ENCODE measurements at regions of chr15 and their contacts with region 1.

Region 1: GRCh38 chr15:40941528-40942336 is 11.5 kb upstream of the CHAC1 start:
- DNase-seq: peak; percentile 58 to 63
- ATAC-seq: peak; percentile 76 to 81
- H3K4me3 ChIP-seq: peak overlapping the region; percentile 61
- H3K27ac ChIP-seq: peak overlapping the region; percentile 89 to 94
- H3K4me1 ChIP-seq: peaks cover 18% of the 10 kb centered on the region
- CTCF ChIP-seq: peak; percentile 89
- EP300 ChIP-seq: no peak
- POLR2A ChIP-seq: no peak; the same call in 1 of the 2 replicates
- RAD21 ChIP-seq: peak; percentile 32 to 66; a peak in 4 of 5 replicates

Region 2: DNA sequence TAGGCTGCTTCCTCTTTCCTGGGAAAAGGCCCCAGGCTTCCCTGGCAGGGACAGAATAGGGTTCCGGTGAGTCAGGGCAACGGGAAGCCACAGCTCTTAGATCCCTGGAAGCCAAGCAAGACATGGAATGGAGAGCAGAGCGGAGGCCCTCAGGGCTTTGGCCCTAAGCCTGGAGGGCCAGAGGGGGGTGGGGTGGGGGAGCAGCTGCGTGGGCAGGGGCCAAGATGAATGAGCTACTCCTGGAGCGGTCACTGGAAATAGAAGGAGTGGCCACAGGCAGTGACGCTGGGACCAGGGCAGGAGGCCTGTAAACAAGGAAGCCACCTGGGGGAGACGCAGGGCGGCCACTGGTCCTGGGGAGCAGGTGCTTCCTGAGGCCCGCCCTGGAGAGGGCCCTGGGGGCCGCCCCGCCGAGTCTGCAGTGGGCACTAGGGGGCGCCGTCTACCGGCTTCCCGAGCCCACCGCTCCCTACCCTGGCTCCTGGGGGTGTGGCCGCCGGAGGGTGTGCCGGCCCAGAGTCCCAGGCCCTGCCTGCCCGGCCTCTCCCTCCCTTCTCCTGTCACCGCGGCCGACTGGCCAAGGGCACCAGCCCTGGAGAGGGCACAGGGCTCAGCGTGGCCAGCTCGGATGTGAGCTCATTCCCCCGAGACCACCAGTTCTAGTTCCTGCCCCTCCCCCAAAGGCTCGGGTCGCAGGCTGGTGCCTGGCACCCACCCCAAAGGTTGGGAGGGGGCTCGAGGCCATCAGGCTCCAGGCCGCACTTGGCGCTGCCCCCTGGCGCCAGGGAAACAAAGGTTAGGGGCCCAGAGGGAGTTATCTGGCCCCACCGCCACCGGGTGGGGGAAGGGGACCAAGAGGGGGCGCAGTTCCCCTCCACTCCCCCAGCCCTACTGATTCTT is 35.4 kb before region 1 on chr15:
- CTCF ChIA-PET with region 1: interaction called, 59 read pairs
- POLR2A ChIA-PET with region 1: no interaction called
- DNase-seq: peak in 1 of 2 experiments; percentile 64
- ATAC-seq: peak; percentile 68 to 90
- H3K4me3 ChIP-seq: peak overlapping the region; percentile 41
- H3K27ac ChIP-seq: peak overlapping the region; percentile 65 to 83
- H3K4me1 ChIP-seq: peaks cover 29% of the 10 kb centered on the region
- CTCF ChIP-seq: peak; percentile 61
- EP300 ChIP-seq: no peak
- POLR2A ChIP-seq: no peak
- RAD21 ChIP-seq: peak; percentile 52 to 65

Region 3: DNA sequence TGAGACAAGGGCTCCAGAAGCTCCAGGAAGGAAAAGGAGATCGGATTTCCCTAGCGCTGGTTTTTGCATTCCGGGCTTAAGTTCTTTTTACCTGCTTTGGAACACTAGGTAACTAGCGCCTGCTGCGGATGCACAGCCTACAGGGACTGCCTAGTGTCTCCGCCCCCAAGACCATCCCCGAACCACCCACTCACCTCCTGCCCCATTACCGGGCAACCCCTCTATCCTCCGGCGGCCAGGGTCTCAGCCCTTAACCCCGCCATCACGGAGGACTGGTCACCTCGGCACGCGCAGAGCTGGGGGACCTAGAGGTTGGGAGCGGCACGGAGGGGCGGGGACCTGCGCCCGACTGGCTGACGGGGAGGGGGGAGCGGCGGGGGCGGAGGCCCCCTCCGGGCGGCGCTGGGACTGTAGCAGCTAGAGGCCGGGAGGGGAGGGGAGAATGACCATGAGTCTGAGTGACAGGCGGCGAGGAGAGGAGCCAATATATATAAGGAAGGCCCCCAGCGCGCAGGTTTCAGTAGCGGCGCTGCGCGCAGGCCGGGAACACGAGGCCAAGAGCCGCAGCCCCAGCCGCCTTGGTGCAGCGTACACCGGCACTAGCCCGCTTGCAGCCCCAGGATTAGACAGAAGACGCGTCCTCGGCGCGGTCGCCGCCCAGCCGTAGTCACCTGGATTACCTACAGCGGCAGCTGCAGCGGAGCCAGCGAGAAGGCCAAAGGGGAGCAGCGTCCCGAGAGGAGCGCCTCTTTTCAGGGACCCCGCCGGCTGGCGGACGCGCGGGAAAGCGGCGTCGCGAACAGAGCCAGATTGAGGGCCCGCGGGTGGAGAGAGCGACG is 12.7 kb before region 1 on chr15 and contains the start of gene DLL4:
- CTCF ChIA-PET with region 1: interaction called, 70 read pairs
- POLR2A ChIA-PET with region 1: interaction called, 16 read pairs
- DNase-seq: peak; percentile 57 to 73
- ATAC-seq: peak; percentile 54 to 74
- H3K4me3 ChIP-seq: peak within 1 kb of the TSS; percentile 48
- H3K27ac ChIP-seq: peak within 1 kb of the TSS in 1 of 2 experiments; percentile 63; a peak in 3 of 6 replicates
- H3K4me1 ChIP-seq: peaks cover 24% of the 10 kb centered on the region; the same call in 1 of the 3 replicates
- CTCF ChIP-seq: no peak
- EP300 ChIP-seq: no peak
- POLR2A ChIP-seq: peak; percentile 70
- RAD21 ChIP-seq: no peak
- polyA plus RNA-seq, gene DLL4: 0.09 and 0.16 TPM in 2 replicates

Region 4: DNA sequence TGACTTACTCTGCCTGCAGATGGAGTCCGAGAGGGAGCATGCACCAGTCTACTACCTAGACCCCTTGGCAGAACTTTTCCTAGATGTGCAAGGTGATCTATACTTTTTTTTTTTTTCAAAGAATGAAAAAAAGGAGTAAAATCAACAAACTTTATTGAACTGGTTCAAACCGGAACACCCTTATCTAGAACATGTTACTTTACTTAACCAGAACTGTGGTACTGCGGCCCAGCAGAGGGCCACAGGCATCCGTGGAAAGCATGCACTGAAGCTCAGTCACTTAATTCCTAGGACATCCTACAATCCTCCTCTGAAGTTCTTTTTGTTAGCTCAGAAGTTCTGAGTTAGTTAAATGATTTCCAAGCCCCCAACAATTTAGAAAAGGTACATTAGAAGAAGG is 33.1 kb after region 1 on chr15:
- CTCF ChIA-PET with region 1: interaction called, 17 read pairs
- POLR2A ChIA-PET with region 1: no interaction called
- DNase-seq: no peak
- ATAC-seq: no peak
- H3K4me3 ChIP-seq: no peak overlapping the region
- H3K27ac ChIP-seq: no peak overlapping the region
- H3K4me1 ChIP-seq: peaks cover 14% of the 10 kb centered on the region; the same call in 2 of the 3 replicates
- CTCF ChIP-seq: no peak
- EP300 ChIP-seq: no peak
- POLR2A ChIP-seq: no peak
- RAD21 ChIP-seq: no peak

Region 5: GRCh38 chr15:41013698-41014414 is 72.1 kb after region 1 on chr15:
- CTCF ChIA-PET with region 1: interaction called, 15 read pairs
- POLR2A ChIA-PET with region 1: no interaction called
- DNase-seq: no peak
- ATAC-seq: no peak
- H3K4me3 ChIP-seq: no peak overlapping the region
- H3K27ac ChIP-seq: no peak overlapping the region
- H3K4me1 ChIP-seq: peaks cover 25% of the 10 kb centered on the region
- CTCF ChIP-seq: no peak
- EP300 ChIP-seq: no peak
- POLR2A ChIP-seq: no peak
- RAD21 ChIP-seq: no peak

Region 6: GRCh38 chr15:41180206-41180789 is 238.6 kb after region 1 on chr15:
- CTCF ChIA-PET with region 1: interaction called, 24 read pairs
- POLR2A ChIA-PET with region 1: no interaction called
- DNase-seq: no peak
- ATAC-seq: no peak
- H3K4me3 ChIP-seq: no peak overlapping the region
- H3K27ac ChIP-seq: no peak overlapping the region
- H3K4me1 ChIP-seq: 0 out of 3 replicates have a peak, but pooled peaks cover 7% of the 10 kb centered on the region
- CTCF ChIP-seq: no peak
- EP300 ChIP-seq: no peak
- POLR2A ChIP-seq: no peak
- RAD21 ChIP-seq: no peak

Region 7: DNA sequence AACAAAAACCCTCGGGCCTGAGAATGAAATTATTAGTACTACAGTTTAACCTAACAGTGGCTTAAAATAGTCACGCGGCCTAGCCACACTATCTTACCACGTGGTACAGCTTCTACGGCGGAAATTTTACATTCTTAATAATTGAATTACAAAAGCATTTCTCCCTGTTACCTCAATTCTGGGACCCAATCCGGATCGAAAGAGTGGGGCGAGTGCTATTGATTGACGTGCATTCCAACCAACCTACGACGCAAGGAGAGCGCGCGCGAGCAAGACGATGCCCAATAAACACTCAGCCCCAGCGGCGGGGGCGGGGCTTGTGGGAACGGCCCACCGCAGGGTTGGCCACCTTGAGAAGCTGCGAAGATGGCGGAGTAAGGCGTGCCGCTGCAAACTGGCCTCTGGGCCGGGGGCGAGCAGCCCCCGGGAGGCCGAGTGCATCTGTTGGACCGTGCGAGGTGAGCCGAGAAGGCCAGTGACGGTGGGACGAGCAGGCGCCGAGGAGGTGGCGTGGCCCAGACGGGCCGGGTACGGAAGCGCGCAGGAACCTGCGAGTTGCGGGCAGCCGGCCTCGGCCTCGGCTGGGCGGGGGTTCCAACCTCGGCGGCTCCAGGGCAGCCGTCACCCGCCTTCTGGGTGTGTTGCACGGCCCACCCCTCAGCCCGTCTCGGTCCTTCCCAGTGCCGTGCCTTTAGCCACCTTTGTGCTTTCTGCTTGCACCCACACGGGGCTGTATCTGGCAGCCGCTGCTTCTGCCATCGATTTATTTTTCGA is 342.1 kb after region 1 on chr15:
- CTCF ChIA-PET with region 1: no interaction called
- POLR2A ChIA-PET with region 1: no interaction called
- DNase-seq: peak; percentile 96 to 98
- ATAC-seq: peak; percentile 98
- H3K4me3 ChIP-seq: peak overlapping the region; percentile 88
- H3K27ac ChIP-seq: peak overlapping the region; percentile 95 to 98
- H3K4me1 ChIP-seq: peaks cover 48% of the 10 kb centered on the region
- CTCF ChIP-seq: no peak
- EP300 ChIP-seq: no peak
- POLR2A ChIP-seq: peak; percentile 70
- RAD21 ChIP-seq: no peak

Measured in A549 (cell line).